Stomach (tissue), 19 donors: ENCODE measurements at regions of chr18 and their contacts with region 1.

Region 1: GRCh38 chr18:47100214-47100831 is 50.0 kb downstream of the HDHD2 start:
- DNase-seq: peak; percentile 59 to 75
- H3K4me3 ChIP-seq: no peak overlapping the region
- H3K27ac ChIP-seq: no peak overlapping the region
- H3K4me1 ChIP-seq: peaks cover 0 to 4% (median 1%) of the 10 kb centered on the region in 4 donors
- H3K27me3 ChIP-seq: no peaks in the 10 kb centered on the region
- CTCF ChIP-seq: peak in 5 of 7 experiments; percentile 43 to 69 (median 60)
- EP300 ChIP-seq: no peak
- POLR2A ChIP-seq: no peak

Region 2: GRCh38 chr18:47204908-47205522 is 104.7 kb after region 1 on chr18:
- intact Hi-C with region 1: loop called (anchors 5 kb)
- DNase-seq: peak; percentile 45 to 70
- H3K4me3 ChIP-seq: no peak overlapping the region
- H3K27ac ChIP-seq: no peak overlapping the region
- H3K4me1 ChIP-seq: no peaks in the 10 kb centered on the region
- H3K27me3 ChIP-seq: peaks cover 0 to 8% (median 0%) of the 10 kb centered on the region in 3 donors
- CTCF ChIP-seq: peak in 5 of 7 experiments; percentile 48 to 81 (median 68)
- EP300 ChIP-seq: no peak
- POLR2A ChIP-seq: no peak

Region 3: DNA sequence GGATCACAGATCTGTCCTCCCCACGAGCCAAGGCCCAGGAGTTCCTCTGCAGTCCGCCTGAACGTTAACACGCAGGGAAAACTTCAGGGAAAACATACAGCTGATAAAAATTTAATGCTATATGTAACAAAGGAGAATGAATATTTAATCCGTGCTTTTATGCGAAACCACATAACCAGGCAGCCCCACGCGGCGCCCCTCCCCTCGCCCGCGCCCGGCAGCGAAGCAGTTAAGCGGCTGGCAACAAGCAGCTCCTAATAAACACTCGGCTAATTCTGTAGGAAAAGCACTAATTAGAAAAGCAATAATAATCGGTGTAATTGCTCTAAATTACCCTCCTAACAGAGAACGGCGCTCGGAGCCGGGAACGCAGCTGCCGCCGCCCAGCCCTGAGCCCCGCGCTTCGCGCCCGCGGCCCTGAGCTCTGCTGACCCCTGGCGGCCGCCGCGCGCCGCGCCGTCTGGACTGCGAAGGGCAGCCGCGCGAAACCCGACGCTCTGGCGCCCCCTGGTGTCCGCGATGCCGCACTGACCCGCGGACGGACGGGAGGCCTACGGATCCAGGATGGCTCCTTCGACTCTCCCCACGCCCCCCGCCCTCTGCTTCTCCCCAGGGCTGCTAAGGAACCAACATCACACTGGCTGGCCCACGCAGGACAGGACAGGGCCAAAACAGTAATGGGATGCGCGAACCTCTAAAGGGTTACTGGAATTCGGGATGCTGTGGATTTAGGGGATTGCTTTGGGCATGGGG is 648.7 kb after region 1 on chr18:
- intact Hi-C with region 1: loop called (anchors 10 kb)
- DNase-seq: peak; percentile 87 to 93
- H3K4me3 ChIP-seq: peak overlapping the region; percentile 26 to 45 (median 38)
- H3K27ac ChIP-seq: no peak overlapping the region
- H3K4me1 ChIP-seq: peaks cover 0 to 12% (median 5%) of the 10 kb centered on the region in 4 donors
- H3K27me3 ChIP-seq: peaks cover 0 to 21% (median 0%) of the 10 kb centered on the region in 3 donors
- CTCF ChIP-seq: peak in 6 of 7 experiments; percentile 41 to 100 (median 93)
- EP300 ChIP-seq: no peak
- POLR2A ChIP-seq: no peak